Activated CD4-positive, alpha-beta T cell treated with anti-CD3 and anti-CD28 coated beads for 36 hours (primary cell): ENCODE measurements at regions of chr11 and their contacts with region 1.

Region 1: DNA sequence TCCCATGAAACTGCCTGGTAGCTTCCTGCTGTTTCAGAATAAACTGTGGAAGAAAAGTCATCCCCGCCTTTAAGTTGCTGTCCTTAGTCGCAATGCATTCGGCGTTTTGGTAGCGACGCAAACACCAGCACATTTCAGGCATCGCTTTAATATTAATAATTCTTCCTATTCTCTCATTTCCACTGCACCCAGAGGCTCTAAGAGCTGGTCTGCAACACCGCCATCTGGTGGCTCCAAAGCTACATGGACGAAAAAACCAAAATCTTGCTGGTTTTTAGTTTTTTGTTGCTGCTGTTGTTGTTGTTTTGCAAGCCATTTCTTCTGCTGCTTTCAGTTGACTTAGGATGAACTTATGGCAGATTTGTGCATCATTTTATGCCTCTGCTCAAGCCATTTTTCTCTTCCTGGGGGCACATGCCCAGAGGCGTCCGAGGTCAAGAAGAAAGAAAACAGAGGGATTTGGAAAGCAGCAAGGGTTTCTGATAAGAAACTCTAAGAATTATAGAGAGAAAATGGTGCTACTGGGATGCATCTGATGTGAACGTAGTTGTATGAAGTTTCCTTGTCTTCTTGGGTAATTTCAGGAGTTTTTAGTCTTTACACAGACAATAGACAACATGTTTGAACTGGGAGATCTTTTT is 345.4 kb upstream of the KIRREL3 start:
- DNase-seq: peak; percentile 38
- ATAC-seq: no peak
- H3K4me3 Mint-ChIP-seq: no peak overlapping the region
- H3K27ac Mint-ChIP-seq: no peak overlapping the region
- H3K4me1 Mint-ChIP-seq: no peaks in the 10 kb centered on the region
- H3K27me3 Mint-ChIP-seq: peaks cover 9% of the 10 kb centered on the region

Region 2: GRCh38 chr11:126440792-126441514 is 905.0 kb before region 1 on chr11:
- CTCF ChIA-PET with region 1: interaction called, 6 read pairs
- POLR2A ChIA-PET with region 1: no interaction called
- intact Hi-C with region 1: loop called in 1 of 2 experiments (anchors 1 kb)
- DNase-seq: peak; percentile 84
- ATAC-seq: peak; percentile 90
- H3K4me3 Mint-ChIP-seq: no peak overlapping the region
- H3K27ac Mint-ChIP-seq: no peak overlapping the region
- H3K4me1 Mint-ChIP-seq: peaks cover 3% of the 10 kb centered on the region
- H3K27me3 Mint-ChIP-seq: peaks cover 7% of the 10 kb centered on the region

Region 3: GRCh38 chr11:126716456-126717083 is 629.4 kb before region 1 on chr11:
- CTCF ChIA-PET with region 1: no interaction called
- POLR2A ChIA-PET with region 1: no interaction called
- intact Hi-C with region 1: loop called in 1 of 2 experiments (anchors 1 kb)
- DNase-seq: peak; percentile 63
- ATAC-seq: peak; percentile 36
- H3K4me3 Mint-ChIP-seq: no peak overlapping the region
- H3K27ac Mint-ChIP-seq: no peak overlapping the region
- H3K4me1 Mint-ChIP-seq: no peaks in the 10 kb centered on the region
- H3K27me3 Mint-ChIP-seq: peaks cover 19% of the 10 kb centered on the region

Region 4: GRCh38 chr11:127627629-127628457 is 281.9 kb after region 1 on chr11:
- CTCF ChIA-PET with region 1: no interaction called
- POLR2A ChIA-PET with region 1: no interaction called
- intact Hi-C with region 1: no loop called
- DNase-seq: no peak
- ATAC-seq: no peak
- H3K4me3 Mint-ChIP-seq: no peak overlapping the region
- H3K27ac Mint-ChIP-seq: no peak overlapping the region
- H3K4me1 Mint-ChIP-seq: no peaks in the 10 kb centered on the region
- H3K27me3 Mint-ChIP-seq: peaks cover 3% of the 10 kb centered on the region